ENCODE measurements at regions of chr9 and their contacts with region 1.

Region 1: DNA sequence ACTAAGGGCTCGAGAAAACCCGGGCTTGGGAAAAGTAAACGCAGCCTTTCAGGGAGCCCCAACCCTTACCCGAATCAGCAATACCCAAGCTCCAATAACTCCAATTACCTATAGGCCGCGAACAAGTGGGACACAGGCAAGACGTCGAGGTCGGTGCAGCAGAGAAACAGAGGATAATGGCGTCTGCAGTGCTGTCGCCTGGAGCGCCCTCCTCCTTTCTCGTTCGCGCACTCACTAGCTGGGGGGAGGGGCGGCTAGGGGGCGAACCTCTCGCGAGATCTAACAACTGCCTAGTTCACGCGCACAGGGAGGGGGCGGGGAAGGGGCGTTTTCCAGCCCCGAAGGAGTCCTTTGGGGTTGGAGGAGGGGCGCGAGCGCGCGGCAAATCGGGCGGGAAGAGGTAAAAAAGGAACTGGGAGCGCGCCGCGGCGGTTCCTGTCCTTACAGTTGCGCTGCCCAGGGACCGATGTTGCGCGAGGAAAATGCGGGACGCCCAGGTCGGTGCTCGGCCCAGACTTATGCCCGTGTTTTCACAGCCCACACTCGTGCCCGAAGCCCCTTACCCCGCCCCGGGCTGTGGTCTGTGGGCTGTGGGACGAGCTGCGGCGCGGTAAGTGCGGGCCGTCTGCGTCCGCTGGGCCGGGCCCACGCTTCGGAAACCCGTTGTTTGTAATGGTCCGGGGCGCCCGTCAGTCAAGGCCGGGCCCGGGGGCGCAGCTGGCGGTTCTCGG is at the start of gene RMI1:
- DNase-seq: peak; percentile 96
- H3K4me3 ChIP-seq: peak within 1 kb of the TSS; percentile 84 to 94 (median 84)
- H3K27ac ChIP-seq: peak within 1 kb of the TSS; percentile 97
- H3K4me1 ChIP-seq: no peaks in the 10 kb centered on the region
- H3K27me3 ChIP-seq: no peaks in the 10 kb centered on the region
- CTCF ChIP-seq: peak in 1 of 2 donors; percentile 28
- total RNA-seq, gene RMI1: 3.7 to 12.1 TPM

Region 2: DNA sequence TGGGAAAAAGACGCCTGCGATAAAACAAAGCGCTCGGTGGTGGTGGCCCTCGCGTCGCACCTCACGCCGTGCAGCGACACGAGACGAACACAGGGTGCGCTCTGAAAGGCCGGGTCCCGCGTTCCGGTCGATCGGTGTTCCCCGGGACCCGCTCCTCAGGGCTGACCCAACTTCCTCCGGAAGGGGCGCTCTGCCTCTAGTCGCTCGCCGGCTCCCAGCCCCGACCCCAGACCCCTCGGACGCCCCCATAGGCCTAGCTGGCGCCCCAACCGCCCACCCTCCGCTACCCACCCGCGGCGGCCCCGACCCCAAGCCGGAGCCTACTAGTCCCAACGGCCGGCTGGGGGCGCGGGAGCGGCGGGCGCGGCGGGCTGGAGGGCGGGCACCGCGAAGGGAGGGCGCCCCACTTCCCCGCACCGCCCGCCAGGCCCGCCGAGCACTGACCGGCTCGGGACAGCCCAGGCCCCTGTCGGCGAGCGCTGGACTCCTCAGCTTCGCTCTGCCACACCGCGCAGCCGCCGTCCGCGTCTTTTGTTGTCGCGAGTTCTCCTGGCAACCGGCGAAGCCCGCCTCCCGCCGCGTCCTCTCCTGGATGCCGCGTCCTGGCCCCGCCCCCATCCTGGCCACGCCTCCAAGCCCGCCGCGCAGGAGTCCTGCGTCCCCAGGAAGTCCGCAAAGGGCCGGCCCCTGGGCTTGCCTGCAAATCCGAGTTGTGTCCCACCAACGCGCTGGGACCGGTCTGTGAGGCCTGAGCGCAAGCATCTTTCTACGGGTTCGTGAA is 59.4 kb before region 1 on chr9 and contains the start of gene KIF27:
- CTCF ChIA-PET with region 1: interaction called, 3 read pairs
- dilution Hi-C with region 1: no loop called
- in situ Hi-C with region 1: no loop called
- intact Hi-C with region 1: loop called (anchors 2 kb)
- DNase-seq: peak; percentile 95
- H3K4me3 ChIP-seq: peak within 1 kb of the TSS; percentile 57 to 70 (median 64)
- H3K27ac ChIP-seq: peak within 1 kb of the TSS; percentile 77
- H3K4me1 ChIP-seq: peaks cover 7% of the 10 kb centered on the region
- H3K27me3 ChIP-seq: no peaks in the 10 kb centered on the region
- CTCF ChIP-seq: peak; percentile 10 to 32
- total RNA-seq, gene KIF27: 4.2 to 5.1 TPM

Region 3: GRCh38 chr9:83962173-83962576 is 18.4 kb before region 1 on chr9:
- CTCF ChIA-PET with region 1: no interaction called
- dilution Hi-C with region 1: no loop called
- in situ Hi-C with region 1: no loop called
- intact Hi-C with region 1: loop called (anchors 2 kb)
- DNase-seq: peak; percentile 48
- H3K4me3 ChIP-seq: no peak overlapping the region
- H3K27ac ChIP-seq: no peak overlapping the region
- H3K4me1 ChIP-seq: peaks cover 11% of the 10 kb centered on the region
- H3K27me3 ChIP-seq: no peaks in the 10 kb centered on the region
- CTCF ChIP-seq: no peak

Region 4: GRCh38 chr9:84111726-84112125 is 131.2 kb after region 1 on chr9:
- CTCF ChIA-PET with region 1: no interaction called
- dilution Hi-C with region 1: no loop called
- in situ Hi-C with region 1: no loop called
- intact Hi-C with region 1: no loop called
- DNase-seq: peak; percentile 79
- H3K4me3 ChIP-seq: no peak overlapping the region
- H3K27ac ChIP-seq: no peak overlapping the region
- H3K4me1 ChIP-seq: peaks cover 4% of the 10 kb centered on the region
- H3K27me3 ChIP-seq: no peaks in the 10 kb centered on the region
- CTCF ChIP-seq: no peak

Region 5: DNA sequence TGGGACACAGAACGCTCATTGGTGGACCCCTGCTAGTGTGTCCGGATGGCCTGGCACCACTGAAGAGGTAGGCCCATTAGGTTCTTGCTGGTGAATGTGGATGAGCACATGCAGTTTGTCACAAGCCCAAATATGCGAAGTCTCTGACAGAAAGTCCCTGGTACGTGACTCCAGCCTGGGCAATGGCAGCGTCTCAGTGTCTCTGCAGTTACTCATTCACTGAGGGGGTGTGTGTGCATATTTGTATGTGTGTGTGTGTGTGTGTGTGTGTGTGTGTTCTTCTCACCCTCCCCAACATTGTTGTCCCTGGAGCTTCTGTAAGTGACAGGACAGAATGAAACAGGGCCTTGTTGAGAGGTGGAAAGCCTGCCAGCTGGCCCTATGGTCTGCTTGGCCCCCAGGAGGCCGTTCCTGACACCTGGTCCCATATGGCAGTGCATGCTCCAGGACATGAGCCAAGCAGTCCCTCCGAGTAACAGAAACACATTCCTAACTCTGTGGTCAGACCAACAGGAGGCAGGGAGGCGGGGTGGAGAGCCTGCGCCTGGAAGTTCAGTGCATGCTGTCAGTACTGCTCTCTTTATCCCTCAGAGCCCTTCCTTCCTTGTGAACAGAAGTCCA is 190.1 kb after region 1 on chr9:
- CTCF ChIA-PET with region 1: no interaction called
- dilution Hi-C with region 1: no loop called
- in situ Hi-C with region 1: no loop called
- intact Hi-C with region 1: loop called (anchors 1 kb)
- DNase-seq: peak; percentile 48
- H3K4me3 ChIP-seq: no peak overlapping the region
- H3K27ac ChIP-seq: peak overlapping the region; percentile 54
- H3K4me1 ChIP-seq: peaks cover 15% of the 10 kb centered on the region
- H3K27me3 ChIP-seq: no peaks in the 10 kb centered on the region
- CTCF ChIP-seq: no peak

Region 6: DNA sequence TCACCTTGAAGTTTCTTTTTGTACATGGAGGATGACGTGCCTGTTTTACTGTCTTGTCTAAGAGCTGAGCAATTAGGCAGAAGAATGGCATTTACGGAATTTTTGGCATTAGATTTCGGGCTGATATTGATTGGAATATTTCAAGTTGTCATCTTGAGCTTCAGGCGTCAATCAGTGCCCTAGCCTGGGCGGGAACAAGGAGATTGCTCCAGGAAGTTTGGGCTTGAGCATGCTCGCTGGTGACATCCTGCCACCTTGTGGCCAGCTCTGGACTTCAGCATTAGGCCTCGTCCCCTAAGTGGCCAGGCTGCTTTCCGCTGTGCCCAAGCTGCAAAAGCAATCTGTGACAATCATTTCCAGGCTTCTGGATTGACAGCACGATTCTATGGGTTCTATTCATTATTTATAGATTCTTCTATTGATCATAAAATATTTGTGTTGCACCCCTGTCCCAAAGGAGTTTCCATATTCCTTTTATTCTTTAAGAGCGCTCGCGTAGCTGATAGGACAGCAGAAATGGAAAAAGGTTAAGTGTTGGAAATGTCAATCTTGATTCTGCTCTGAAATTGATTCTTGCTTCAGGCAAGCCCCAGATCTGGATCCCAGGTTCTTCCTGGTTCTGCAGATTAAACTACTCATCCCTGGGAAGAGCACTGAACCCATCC is 280.7 kb after region 1 on chr9:
- CTCF ChIA-PET with region 1: no interaction called
- dilution Hi-C with region 1: no loop called
- in situ Hi-C with region 1: no loop called
- intact Hi-C with region 1: loop called (anchors 1 kb)
- DNase-seq: peak; percentile 55
- H3K4me3 ChIP-seq: no peak overlapping the region
- H3K27ac ChIP-seq: no peak overlapping the region
- H3K4me1 ChIP-seq: no peaks in the 10 kb centered on the region
- H3K27me3 ChIP-seq: no peaks in the 10 kb centered on the region
- CTCF ChIP-seq: peak; percentile 95 to 96

Measured in mammary epithelial cell (primary cell).